CD4-positive, alpha-beta memory T cell (primary cell): ENCODE measurements at regions of chr11 and their contacts with region 1.

Region 1: GRCh38 chr11:62573592-62574362 is at the start of gene EEF1G:
- DNase-seq: peak; percentile 98 to 100 (median 100)
- H3K4me3 ChIP-seq: peak within 1 kb of the TSS; percentile 89 to 100
- H3K4me3 Mint-ChIP-seq: peak within 1 kb of the TSS; percentile 92 to 98 (median 98)
- H3K27ac ChIP-seq: peak within 1 kb of the TSS; percentile 77
- H3K27ac Mint-ChIP-seq: peak within 1 kb of the TSS; percentile 94 to 98 (median 97)
- H3K4me1 ChIP-seq: peaks cover 44% of the 10 kb centered on the region
- H3K4me1 Mint-ChIP-seq: peaks cover 34 to 60% (median 47%) of the 10 kb centered on the region in 4 donors
- H3K27me3 ChIP-seq: no peaks in the 10 kb centered on the region
- H3K27me3 Mint-ChIP-seq: no peaks in the 10 kb centered on the region
- total RNA-seq, gene EEF1G: 1,815 to 1,855 TPM

Region 2: DNA sequence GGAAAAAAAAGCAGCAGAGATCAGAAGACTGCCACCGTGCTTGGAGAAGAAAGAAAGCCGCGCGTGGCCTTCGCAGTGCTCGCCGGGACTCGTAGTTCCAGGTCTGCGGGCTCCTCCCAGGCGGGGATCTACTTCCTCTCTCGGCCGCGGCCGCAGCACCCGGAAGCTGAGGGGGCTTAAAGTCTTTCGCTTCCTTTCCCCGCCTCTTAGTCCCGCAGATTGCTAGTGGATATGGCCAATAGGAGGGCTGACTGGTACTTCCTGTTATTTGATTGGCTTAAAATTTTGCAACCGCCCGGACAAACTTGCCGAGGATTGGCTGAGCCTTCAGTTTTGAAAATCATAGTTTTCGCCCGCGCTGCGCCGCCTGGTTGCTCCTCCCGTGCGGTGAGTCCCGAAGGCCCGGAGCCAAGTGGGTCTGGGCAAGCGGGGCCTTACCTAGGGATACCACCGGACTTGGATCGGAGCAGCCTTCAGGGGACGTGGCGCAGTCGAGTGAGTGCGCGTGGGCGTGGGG is 450.1 kb before region 1 on chr11 and contains the start of gene INCENP:
- CTCF ChIA-PET with region 1: no interaction called
- POLR2A ChIA-PET with region 1: no interaction called
- intact Hi-C with region 1: no loop called
- DNase-seq: peak; percentile 92 to 98 (median 96)
- H3K4me3 ChIP-seq: peak within 1 kb of the TSS; percentile 88 to 96
- H3K4me3 Mint-ChIP-seq: peak within 1 kb of the TSS; percentile 93 to 98 (median 95)
- H3K27ac ChIP-seq: peak within 1 kb of the TSS; percentile 82
- H3K27ac Mint-ChIP-seq: peak within 1 kb of the TSS; percentile 86 to 95 (median 92)
- H3K4me1 ChIP-seq: peaks cover 23% of the 10 kb centered on the region
- H3K4me1 Mint-ChIP-seq: peaks cover 15 to 42% (median 27%) of the 10 kb centered on the region in 4 donors
- H3K27me3 ChIP-seq: no peaks in the 10 kb centered on the region
- H3K27me3 Mint-ChIP-seq: peaks cover 0 to 2% of the 10 kb centered on the region in 2 donors
- total RNA-seq, gene INCENP: 28.4 to 32.1 TPM

Region 3: DNA sequence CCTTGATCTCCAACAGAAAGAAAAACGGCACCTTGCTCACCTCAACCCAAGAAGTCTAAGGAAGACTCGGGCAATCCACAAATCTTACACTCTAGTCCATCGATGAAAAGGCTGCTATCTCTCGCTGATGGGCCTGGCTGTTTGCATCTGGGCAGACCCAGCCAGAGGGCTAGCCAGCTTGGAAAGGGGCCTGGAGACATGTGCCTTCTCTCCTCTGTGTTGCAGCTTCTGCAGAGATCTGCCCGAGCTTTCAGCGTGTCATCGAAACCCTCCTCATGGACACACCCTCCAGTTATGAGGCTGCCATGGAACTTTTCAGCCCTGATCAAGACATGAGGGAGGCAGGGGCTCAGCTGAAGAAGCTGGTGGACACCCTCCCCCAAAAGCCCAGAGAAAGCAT is 151.8 kb before region 1 on chr11:
- CTCF ChIA-PET with region 1: interaction called, 14 read pairs
- POLR2A ChIA-PET with region 1: interaction called, 13 read pairs
- intact Hi-C with region 1: no loop called
- DNase-seq: no peak
- H3K4me3 ChIP-seq: no peak overlapping the region
- H3K4me3 Mint-ChIP-seq: no peak overlapping the region
- H3K27ac ChIP-seq: no peak overlapping the region
- H3K27ac Mint-ChIP-seq: peak overlapping the region in 1 of 7 donors; percentile 55
- H3K4me1 ChIP-seq: peaks cover 19% of the 10 kb centered on the region
- H3K4me1 Mint-ChIP-seq: peaks cover 10 to 16% (median 14%) of the 10 kb centered on the region in 4 donors
- H3K27me3 ChIP-seq: no peaks in the 10 kb centered on the region
- H3K27me3 Mint-ChIP-seq: no peaks in the 10 kb centered on the region

Region 4: DNA sequence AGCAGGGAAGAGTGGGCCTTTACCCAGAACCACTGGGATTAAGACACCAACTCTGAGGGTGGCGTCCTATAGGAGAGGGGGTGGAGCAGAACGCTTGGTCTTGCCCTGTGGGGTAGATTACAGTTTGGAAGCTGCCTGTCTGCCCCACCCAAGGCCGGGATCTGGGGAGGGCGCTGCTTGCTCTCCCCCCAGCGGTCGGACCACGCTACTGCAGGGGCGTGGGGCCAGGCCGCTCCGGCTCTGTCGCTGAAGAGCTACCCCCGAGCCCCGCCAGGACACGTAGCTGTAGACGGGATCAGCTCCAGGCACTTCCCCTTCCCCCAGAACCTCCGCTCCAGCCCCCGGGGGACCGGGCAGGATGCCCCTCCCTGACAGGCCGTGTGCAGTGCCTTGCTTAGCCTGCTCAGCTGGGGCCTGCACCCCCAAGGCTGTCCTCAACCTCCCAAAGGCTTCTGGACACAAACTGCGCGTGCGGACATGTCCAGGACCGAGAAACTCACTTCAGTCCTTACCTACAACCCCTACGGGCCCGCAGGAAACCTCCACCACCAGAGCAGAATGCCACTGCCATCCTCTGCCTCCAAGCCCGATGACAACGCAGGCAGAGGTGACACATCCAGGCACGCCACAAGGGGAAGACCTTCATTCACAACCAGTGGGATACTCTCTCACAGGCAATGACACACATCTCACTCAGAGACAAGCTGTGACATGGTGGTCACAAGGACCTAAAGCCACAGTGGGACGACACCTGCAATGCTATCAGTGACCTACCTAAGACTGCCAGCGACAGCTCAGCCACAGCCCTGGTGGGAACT is 30.8 kb before region 1 on chr11:
- CTCF ChIA-PET with region 1: interaction called, 4 read pairs
- POLR2A ChIA-PET with region 1: interaction called, 56 read pairs
- intact Hi-C with region 1: no loop called
- DNase-seq: peak; percentile 71 to 92 (median 71)
- H3K4me3 ChIP-seq: peak overlapping the region; percentile 91 to 94
- H3K4me3 Mint-ChIP-seq: peak overlapping the region; percentile 97 to 99 (median 98)
- H3K27ac ChIP-seq: peak overlapping the region; percentile 97
- H3K27ac Mint-ChIP-seq: peak overlapping the region; percentile 94 to 99 (median 98)
- H3K4me1 ChIP-seq: peaks cover 77% of the 10 kb centered on the region
- H3K4me1 Mint-ChIP-seq: peaks cover 48 to 88% (median 63%) of the 10 kb centered on the region in 4 donors
- H3K27me3 ChIP-seq: no peaks in the 10 kb centered on the region
- H3K27me3 Mint-ChIP-seq: no peaks in the 10 kb centered on the region

Region 5: DNA sequence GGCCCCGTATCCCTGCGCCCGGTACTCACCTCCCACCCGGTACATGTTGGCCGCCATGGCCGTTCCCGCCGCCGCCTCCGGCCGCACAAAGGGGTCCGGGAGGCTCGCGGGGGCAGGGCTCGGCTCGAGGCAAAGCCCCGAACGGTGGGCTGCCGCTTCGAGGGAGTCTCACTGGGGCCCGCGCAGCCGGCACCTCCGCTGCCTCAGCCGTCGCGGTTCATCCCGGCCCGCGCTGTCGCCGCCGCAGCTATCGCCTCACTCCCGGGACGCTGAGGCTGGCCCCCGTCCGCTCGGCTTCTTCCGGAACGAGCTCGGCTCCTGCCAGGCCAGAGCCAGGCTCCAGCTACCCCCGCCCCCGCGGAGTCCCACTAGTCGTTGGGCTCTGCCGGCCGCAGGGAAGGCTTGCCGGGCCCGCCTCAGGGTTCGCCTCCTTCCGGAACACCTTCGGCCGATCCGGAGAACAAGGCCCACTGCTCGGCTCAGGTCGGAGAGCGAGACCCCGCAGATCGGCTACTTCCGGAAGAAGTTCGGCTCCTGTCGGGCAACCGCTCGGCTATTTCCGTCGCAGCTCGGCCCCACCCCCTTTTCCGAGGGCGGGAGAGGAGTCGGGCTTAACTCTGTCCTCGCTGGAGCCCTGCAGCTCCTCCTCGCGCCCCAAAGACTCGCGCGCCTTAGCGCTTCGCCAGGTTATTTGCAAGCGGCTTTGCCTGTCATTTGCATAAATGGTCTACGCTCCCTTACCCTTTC is 27.8 kb after region 1 on chr11 and contains the start of gene MTA2:
- CTCF ChIA-PET with region 1: interaction called, 3 read pairs
- POLR2A ChIA-PET with region 1: interaction called, 29 read pairs
- intact Hi-C with region 1: no loop called
- DNase-seq: peak; percentile 99 to 100 (median 100)
- H3K4me3 ChIP-seq: peak within 1 kb of the TSS; percentile 71 to 82
- H3K4me3 Mint-ChIP-seq: peak within 1 kb of the TSS; percentile 91 to 99 (median 96)
- H3K27ac ChIP-seq: peak within 1 kb of the TSS; percentile 91
- H3K27ac Mint-ChIP-seq: peak within 1 kb of the TSS; percentile 90 to 99 (median 98)
- H3K4me1 ChIP-seq: peaks cover 35% of the 10 kb centered on the region
- H3K4me1 Mint-ChIP-seq: peaks cover 33 to 60% (median 46%) of the 10 kb centered on the region in 4 donors
- H3K27me3 ChIP-seq: no peaks in the 10 kb centered on the region
- H3K27me3 Mint-ChIP-seq: no peaks in the 10 kb centered on the region
- total RNA-seq, gene MTA2: 207 to 210 TPM

Region 6: DNA sequence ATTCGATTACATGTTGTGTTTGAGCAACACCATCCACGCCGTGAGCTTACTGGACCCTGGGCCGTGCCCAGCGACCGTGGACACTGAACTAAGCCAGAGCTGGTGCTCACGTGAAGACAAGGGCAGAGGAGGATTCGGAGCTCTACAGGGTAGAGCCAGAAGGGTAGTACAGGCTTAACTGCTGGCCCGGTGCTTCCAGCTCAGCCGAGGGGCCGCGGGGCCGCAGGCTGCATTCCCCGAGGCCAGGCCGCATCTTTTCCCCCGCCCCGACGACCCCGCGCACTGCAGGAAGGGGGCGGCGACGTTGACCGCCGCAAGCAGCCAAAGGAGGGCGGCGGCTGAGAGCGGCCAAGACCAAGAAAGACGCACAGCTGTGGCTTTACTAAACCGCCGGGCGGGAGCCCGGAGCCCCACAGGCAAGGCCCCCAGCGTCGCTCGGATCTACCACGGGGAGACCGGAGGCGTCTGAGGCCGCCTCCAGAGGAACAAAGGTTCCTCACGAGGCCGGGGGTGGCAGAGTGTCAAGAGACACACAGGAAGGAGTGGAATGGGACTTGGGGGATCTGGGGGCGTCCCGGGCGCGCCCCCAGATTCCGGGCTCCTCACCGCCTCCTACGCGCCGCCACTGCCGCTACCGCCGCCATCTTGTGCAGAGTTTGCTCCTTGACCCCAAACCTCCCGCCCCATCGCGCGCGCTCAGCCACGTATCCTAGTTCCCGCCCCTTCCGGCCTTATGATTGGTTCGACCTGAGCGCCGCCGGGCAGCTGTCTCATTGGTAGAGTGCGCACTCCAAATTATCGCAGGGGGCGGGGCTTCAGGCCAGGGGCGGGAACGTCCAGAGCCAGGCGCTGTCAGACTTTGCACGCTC is 72.4 kb after region 1 on chr11 and contains the start of gene GANAB:
- CTCF ChIA-PET with region 1: no interaction called
- POLR2A ChIA-PET with region 1: interaction called, 10 read pairs
- intact Hi-C with region 1: no loop called
- DNase-seq: peak; percentile 95 to 99 (median 97)
- H3K4me3 ChIP-seq: peak within 1 kb of the TSS; percentile 55 to 76
- H3K4me3 Mint-ChIP-seq: peak within 1 kb of the TSS; percentile 93 to 99 (median 95)
- H3K27ac ChIP-seq: peak within 1 kb of the TSS; percentile 92
- H3K27ac Mint-ChIP-seq: peak within 1 kb of the TSS; percentile 84 to 99 (median 97)
- H3K4me1 ChIP-seq: peaks cover 37% of the 10 kb centered on the region
- H3K4me1 Mint-ChIP-seq: peaks cover 14 to 48% (median 26%) of the 10 kb centered on the region in 4 donors
- H3K27me3 ChIP-seq: no peaks in the 10 kb centered on the region
- H3K27me3 Mint-ChIP-seq: no peaks in the 10 kb centered on the region
- total RNA-seq, gene GANAB: 260 to 262 TPM

Region 7: GRCh38 chr11:62671575-62672389 is 98.0 kb after region 1 on chr11 and contains the starts of genes LBHD1 and UQCC3:
- CTCF ChIA-PET with region 1: no interaction called
- POLR2A ChIA-PET with region 1: interaction called, 17 read pairs
- intact Hi-C with region 1: no loop called
- DNase-seq: peak; percentile 68 to 80 (median 75)
- H3K4me3 ChIP-seq: peak within 1 kb of the TSS; percentile 91 to 97
- H3K4me3 Mint-ChIP-seq: peak within 1 kb of the TSS; percentile 93 to 99 (median 99)
- H3K27ac ChIP-seq: peak within 1 kb of the TSS; percentile 74
- H3K27ac Mint-ChIP-seq: peak within 1 kb of the TSS; percentile 89 to 98 (median 97)
- H3K4me1 ChIP-seq: peaks cover 55% of the 10 kb centered on the region
- H3K4me1 Mint-ChIP-seq: peaks cover 14 to 74% (median 43%) of the 10 kb centered on the region in 4 donors
- H3K27me3 ChIP-seq: no peaks in the 10 kb centered on the region
- H3K27me3 Mint-ChIP-seq: no peaks in the 10 kb centered on the region
- total RNA-seq, gene LBHD1: 26.7 to 28.6 TPM
- total RNA-seq, gene UQCC3: 7.2 to 8.5 TPM